Right cardiac atrium (tissue), 5 donors: ENCODE measurements at regions of chr11 and their contacts with region 1.

Region 1: GRCh38 chr11:31641477-31642062 is 132.0 kb downstream of the ELP4 start:
- DNase-seq: no peak
- ATAC-seq: no peak
- H3K4me3 ChIP-seq: no peak overlapping the region
- H3K27ac ChIP-seq: no peak overlapping the region
- H3K4me1 ChIP-seq: no peaks in the 10 kb centered on the region
- H3K27me3 ChIP-seq: no peaks in the 10 kb centered on the region

Region 2: GRCh38 chr11:31445621-31446020 is 195.9 kb before region 1 on chr11:
- intact Hi-C with region 1: no loop called
- DNase-seq: no peak
- ATAC-seq: no peak
- H3K4me3 ChIP-seq: no peak overlapping the region
- H3K27ac ChIP-seq: no peak overlapping the region
- H3K4me1 ChIP-seq: no peaks in the 10 kb centered on the region
- H3K27me3 ChIP-seq: no peaks in the 10 kb centered on the region

Region 3: GRCh38 chr11:31702966-31703365 is 61.4 kb after region 1 on chr11:
- intact Hi-C with region 1: loop called in 1 of 4 experiments (anchors 10 kb)
- DNase-seq: no peak
- ATAC-seq: no peak
- H3K4me3 ChIP-seq: no peak overlapping the region
- H3K27ac ChIP-seq: no peak overlapping the region
- H3K4me1 ChIP-seq: no peaks in the 10 kb centered on the region
- H3K27me3 ChIP-seq: no peaks in the 10 kb centered on the region

Region 4: GRCh38 chr11:31740131-31740530 is 98.6 kb after region 1 on chr11:
- intact Hi-C with region 1: no loop called
- DNase-seq: no peak
- ATAC-seq: no peak
- H3K4me3 ChIP-seq: no peak overlapping the region
- H3K27ac ChIP-seq: no peak overlapping the region
- H3K4me1 ChIP-seq: no peaks in the 10 kb centered on the region
- H3K27me3 ChIP-seq: no peaks in the 10 kb centered on the region

Region 5: GRCh38 chr11:31895926-31896325 is 254.4 kb after region 1 on chr11:
- intact Hi-C with region 1: no loop called
- DNase-seq: no peak
- ATAC-seq: no peak
- H3K4me3 ChIP-seq: no peak overlapping the region
- H3K27ac ChIP-seq: no peak overlapping the region
- H3K4me1 ChIP-seq: no peaks in the 10 kb centered on the region
- H3K27me3 ChIP-seq: no peaks in the 10 kb centered on the region